PC-9 (cell line): ENCODE measurements at regions of chr11 and their contacts with region 1.

Region 1: GRCh38 chr11:57213342-57214095 is 23.5 kb downstream of the APLNR start:
- DNase-seq: no peak
- H3K4me3 ChIP-seq: no peak overlapping the region
- H3K27ac ChIP-seq: no peak overlapping the region
- H3K4me1 ChIP-seq: no peaks in the 10 kb centered on the region
- H3K27me3 ChIP-seq: no peaks in the 10 kb centered on the region
- CTCF ChIP-seq: no peak

Region 2: DNA sequence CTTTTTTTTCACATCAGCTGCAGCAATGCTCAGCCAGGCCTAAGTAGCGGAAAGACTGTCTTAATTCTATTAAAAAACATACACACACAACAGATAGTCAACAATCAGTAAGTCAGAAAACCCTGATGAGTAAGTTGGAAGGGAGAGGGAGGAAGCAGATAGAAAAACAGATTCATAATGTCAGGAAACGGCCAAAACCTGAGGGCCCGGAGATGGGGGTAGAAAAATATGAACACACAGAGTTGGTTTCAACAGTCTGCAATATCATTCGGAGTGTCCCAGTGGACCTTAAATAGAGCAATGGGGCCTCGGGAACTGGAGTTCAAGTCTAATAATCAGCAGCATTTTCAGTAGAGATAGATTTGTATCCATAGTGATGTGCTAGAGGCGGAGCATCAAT is 16.9 kb before region 1 on chr11:
- CTCF ChIA-PET with region 1: no interaction called
- POLR2A ChIA-PET with region 1: no interaction called
- intact Hi-C with region 1: no loop called
- DNase-seq: no peak
- H3K4me3 ChIP-seq: no peak overlapping the region
- H3K27ac ChIP-seq: no peak overlapping the region
- H3K4me1 ChIP-seq: no peaks in the 10 kb centered on the region
- H3K27me3 ChIP-seq: peaks cover 30% of the 10 kb centered on the region
- CTCF ChIP-seq: no peak

Region 3: DNA sequence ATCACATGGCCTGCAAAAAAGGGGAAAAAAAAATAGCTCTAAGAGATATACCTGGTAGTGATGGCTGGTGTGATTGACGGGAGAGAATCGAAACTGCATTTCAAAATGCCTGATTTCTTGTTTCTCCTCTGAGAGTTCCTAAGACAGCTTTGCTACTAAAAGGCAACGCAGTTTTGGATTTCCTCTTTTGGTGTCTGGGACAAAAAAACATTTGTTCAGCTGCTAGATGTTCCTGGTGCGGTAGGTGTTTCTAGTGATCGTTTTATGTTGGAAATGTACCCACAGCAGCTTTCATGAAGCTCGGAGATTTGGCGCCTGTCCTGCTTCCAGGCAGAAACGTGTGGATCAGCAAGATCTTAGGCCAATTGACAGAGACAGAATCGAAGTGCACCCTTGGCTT is 142.7 kb after region 1 on chr11:
- CTCF ChIA-PET with region 1: interaction called, 13 read pairs
- POLR2A ChIA-PET with region 1: no interaction called
- intact Hi-C with region 1: no loop called
- DNase-seq: no peak
- H3K4me3 ChIP-seq: no peak overlapping the region
- H3K27ac ChIP-seq: no peak overlapping the region
- H3K4me1 ChIP-seq: peaks cover 13% of the 10 kb centered on the region; the same call in 1 of the 2 replicates
- H3K27me3 ChIP-seq: peaks cover 20% of the 10 kb centered on the region
- CTCF ChIP-seq: no peak